Dorsolateral prefrontal cortex (tissue), 120 donors: ENCODE measurements at regions of chr2 and their contacts with region 1.

Region 1: DNA sequence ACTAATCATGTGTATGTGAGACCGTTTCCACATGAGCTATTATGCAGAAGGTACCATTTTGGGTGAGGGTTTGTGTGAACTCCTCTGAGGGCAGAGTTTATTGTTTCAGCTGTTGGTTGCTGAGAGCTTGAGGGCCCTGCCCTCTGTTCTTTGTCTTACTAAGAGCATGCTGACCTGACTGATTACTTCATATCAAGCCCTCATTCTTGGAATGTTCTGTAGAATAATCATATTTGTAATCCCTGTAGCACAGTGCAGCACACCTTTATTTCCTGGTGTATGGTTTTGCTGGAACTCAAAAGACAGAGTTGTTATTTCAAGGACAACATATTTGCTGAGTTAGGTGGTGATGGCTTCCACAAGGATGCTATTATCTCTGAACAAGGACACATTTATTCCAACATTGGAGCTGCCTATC is 118.5 kb downstream of the GALNT3 start:
- DNase-seq: no peak
- H3K4me3 ChIP-seq: no peak overlapping the region
- H3K27ac ChIP-seq: peak overlapping the region in 46 of 59 donors; percentile 3 to 78 (median 44)
- H3K27me3 ChIP-seq: no peaks in the 10 kb centered on the region
- CTCF ChIP-seq: no peak

Region 2: DNA sequence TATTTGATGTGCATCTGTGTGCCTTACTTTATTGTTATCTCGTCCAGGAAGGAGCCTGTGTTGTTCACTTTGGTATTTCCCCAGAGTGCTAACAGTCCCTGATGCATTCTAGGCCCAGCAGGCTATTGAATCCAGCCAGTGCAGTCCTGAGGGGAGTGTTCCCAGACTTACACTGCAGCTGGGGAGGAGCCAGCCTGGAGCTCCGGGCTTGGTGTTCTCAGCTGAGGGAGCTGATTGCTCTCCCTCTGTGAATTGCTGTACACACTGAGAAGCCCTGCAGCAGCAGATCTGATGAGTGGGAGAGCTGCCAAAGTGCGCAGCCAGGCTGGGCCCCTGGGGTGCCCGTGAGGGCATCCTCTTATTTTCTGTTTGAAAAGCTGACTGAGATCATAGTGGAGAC is 40.7 kb before region 1 on chr2:
- intact Hi-C with region 1: loop called in 1 of 2 experiments (anchors 5 kb)
- DNase-seq: peak; percentile 45 to 91 (median 85)
- H3K4me3 ChIP-seq: peak overlapping the region in 26 of 59 donors; percentile 0 to 44 (median 16)
- H3K27ac ChIP-seq: peak overlapping the region in 57 of 59 donors; percentile 5 to 85 (median 65)
- H3K27me3 ChIP-seq: no peaks in the 10 kb centered on the region
- CTCF ChIP-seq: peak in 6 of 56 donors; percentile 8 to 30 (median 18)

Region 3: DNA sequence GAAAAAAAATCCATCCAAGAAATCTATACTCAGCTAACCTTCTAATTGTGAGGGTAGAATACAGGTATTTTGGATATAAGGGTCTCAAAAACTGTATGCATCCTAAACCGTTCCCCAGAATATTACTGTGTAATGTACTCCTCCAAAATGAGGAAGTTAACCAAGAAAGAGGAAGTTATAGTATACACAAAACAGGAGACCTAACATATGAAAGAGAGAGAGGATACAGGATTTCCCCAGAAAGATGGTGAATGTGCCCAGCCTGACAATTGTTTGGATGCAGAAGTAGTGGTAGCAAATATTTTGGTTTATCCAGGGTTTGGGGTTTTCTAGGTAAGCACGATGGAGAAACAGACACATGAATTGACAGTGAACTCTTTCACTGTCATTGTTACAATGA is 67.9 kb after region 1 on chr2:
- intact Hi-C with region 1: no loop called
- DNase-seq: no peak
- H3K4me3 ChIP-seq: no peak overlapping the region
- H3K27ac ChIP-seq: no peak overlapping the region
- H3K27me3 ChIP-seq: no peaks in the 10 kb centered on the region
- CTCF ChIP-seq: no peak